H1 (cell line): ENCODE measurements at regions of chr7 and their contacts with region 1.

Region 1: GRCh38 chr7:100867040-100867775 is at the start of gene TRIP6:
- DNase-seq: peak; percentile 64 to 97
- H3K4me3 ChIP-seq: peak within 1 kb of the TSS; percentile 68 to 93 (median 83)
- H3K27ac ChIP-seq: peak within 1 kb of the TSS; percentile 94
- H3K4me1 ChIP-seq: peaks cover 2 to 16% (median 11%) of the 10 kb centered on the region in 4 experiments
- H3K27me3 ChIP-seq: no peaks in the 10 kb centered on the region
- CTCF ChIP-seq: no peak
- EP300 ChIP-seq: peak in 1 of 2 experiments; percentile 73; a peak in 1 of 3 replicates
- POLR2A ChIP-seq: peak in 1 of 2 experiments; percentile 73; a peak in 2 of 3 replicates
- RAD21 ChIP-seq: no peak
- total RNA-seq, gene TRIP6: 103 and 109 TPM in 2 replicates

Region 2: DNA sequence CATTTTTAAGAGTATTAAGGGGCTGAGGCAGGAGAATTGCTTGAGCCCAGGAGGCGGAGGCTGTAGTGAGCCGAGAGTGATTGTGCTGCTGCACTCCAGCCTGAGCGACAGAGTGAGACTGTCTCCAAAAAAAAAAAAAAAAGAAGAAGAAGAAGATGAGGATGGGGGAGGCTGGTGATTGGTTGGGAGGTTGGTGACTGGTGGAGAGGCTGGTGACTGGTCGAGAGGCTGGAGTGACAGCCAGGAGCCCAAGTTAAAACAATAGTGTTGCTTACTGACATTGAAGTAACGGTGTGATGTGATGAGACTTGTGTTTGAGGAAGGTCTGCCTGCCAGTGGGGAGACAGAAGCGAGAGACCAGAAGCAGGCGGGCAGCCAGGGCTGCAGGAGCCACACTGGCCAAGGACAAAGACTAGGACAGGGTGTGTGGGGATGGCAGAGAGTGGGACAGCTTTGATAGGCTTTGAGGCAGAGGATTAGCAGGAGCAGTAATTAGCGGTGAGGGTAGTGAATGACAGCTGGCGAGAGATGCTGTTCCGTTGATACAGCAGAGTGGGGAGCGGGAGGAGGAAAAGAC is 12.6 kb after region 1 on chr7:
- CTCF ChIA-PET with region 1: interaction called, 5 read pairs
- POLR2A ChIA-PET with region 1: interaction called, 313 read pairs
- DNase-seq: no peak
- H3K4me3 ChIP-seq: no peak overlapping the region
- H3K27ac ChIP-seq: no peak overlapping the region
- H3K4me1 ChIP-seq: peaks cover 0 to 5% (median 0%) of the 10 kb centered on the region in 4 experiments; a peak in 1 of 7 replicates
- H3K27me3 ChIP-seq: no peaks in the 10 kb centered on the region; a peak in 1 of 7 replicates
- CTCF ChIP-seq: no peak
- EP300 ChIP-seq: no peak
- POLR2A ChIP-seq: no peak
- RAD21 ChIP-seq: no peak